ENCODE measurements at regions of chr16 and their contacts with region 1.

Region 1: DNA sequence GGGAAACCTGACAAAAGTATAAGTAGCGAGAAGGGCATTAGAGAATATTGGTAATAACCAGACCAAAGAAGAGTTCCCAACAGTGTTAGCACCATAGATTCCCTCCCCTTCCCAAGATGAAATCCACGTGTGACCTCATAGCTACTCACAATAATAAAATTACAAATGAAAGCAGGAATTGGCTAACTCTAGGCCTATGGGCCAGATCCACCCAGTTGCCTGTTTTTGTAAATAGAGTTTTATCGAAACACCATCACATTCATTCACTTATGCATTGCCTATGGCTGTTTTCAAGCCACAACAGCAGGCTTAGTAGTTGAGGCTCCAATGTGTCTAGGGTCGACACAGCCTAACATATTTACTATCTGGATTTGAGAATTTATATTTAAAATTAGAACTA is 7.8 kb downstream of the CPHXL start:
- DNase-seq: no peak
- H3K4me3 ChIP-seq: no peak overlapping the region
- H3K27ac ChIP-seq: no peak overlapping the region
- H3K4me1 ChIP-seq: no peaks in the 10 kb centered on the region
- H3K27me3 ChIP-seq: peaks cover 25% of the 10 kb centered on the region
- CTCF ChIP-seq: no peak

Region 2: DNA sequence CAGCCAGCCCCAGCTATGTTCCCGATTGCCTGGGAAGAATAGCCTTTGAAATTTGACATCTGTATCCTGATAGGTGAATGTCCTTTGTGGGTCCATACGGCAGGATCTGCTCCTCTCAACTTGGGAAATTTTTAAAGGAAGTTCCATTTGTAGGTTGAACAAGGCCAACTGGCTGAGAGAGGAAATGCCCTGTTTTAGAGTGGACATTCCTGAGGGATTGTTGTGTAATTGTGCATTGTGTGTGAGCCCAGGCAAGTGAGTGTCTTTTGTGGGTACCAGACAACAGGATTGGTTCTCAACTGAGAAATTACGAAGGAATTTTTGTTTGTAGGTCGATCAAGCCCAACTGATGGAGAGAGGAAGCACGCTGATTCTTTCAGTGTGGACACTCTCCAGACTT is 39.1 kb before region 1 on chr16:
- CTCF ChIA-PET with region 1: no interaction called
- POLR2A ChIA-PET with region 1: no interaction called
- intact Hi-C with region 1: no loop called
- DNase-seq: no peak
- H3K4me3 ChIP-seq: no peak overlapping the region
- H3K27ac ChIP-seq: no peak overlapping the region
- H3K4me1 ChIP-seq: no peaks in the 10 kb centered on the region
- H3K27me3 ChIP-seq: no peaks in the 10 kb centered on the region; the same call in 1 of the 2 replicates
- CTCF ChIP-seq: no peak

Region 3: DNA sequence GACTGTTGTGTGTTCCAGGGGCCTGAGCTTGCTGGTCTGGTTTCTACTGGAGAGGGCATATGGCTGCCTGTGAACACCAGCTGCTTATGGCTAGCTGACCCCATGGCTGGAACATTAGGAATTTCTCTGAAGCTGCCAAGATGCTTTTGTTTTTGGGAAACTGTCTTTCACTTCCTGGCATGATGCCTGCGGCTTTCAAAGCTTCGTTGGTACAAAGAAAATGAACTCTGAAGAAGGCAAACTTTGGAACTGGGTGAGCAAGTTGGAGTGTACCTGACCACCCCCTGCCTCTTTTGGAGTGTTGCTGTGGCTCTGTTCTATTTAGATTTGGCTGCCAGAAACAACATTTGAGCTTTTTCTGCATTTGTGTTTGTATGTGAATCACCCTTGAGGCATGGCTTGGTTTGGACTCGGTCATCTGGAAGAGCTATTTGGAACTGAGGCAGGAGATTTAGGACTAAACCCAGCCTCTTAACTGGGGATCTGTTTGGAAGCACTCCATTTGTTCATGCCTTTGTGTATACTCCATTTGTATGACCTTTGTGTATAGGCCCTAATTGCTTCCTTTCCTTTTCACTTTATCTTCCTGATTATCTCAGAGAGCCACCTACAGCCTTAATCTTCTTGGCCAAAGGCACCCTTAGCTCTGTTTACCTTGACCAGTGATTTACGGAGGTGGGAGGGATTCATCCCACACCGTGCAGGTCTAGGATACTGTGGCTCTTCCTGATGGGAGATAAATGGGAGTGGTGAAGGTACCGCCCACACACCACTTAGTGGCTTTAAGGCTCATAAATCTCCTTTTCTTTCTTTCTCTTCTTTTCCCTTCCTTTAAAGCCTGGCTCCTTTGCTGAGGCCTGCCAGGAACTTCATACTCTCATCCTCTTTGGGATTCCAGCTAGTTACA is 15.1 kb after region 1 on chr16:
- CTCF ChIA-PET with region 1: interaction called, 20 read pairs
- POLR2A ChIA-PET with region 1: no interaction called
- intact Hi-C with region 1: no loop called
- DNase-seq: peak in 1 of 2 experiments; percentile 63
- H3K4me3 ChIP-seq: no peak overlapping the region
- H3K27ac ChIP-seq: no peak overlapping the region
- H3K4me1 ChIP-seq: no peaks in the 10 kb centered on the region
- H3K27me3 ChIP-seq: no peaks in the 10 kb centered on the region
- CTCF ChIP-seq: no peak